ENCODE measurements at regions of chr3 and their contacts with region 1.

Region 1: GRCh38 chr3:112734718-112735350 is 93.9 kb upstream of the CCDC80 start:
- DNase-seq: peak; percentile 83
- ATAC-seq: peak; percentile 72
- H3K4me3 ChIP-seq: no peak overlapping the region
- H3K4me3 Mint-ChIP-seq: no peak overlapping the region
- H3K27ac ChIP-seq: no peak overlapping the region
- H3K27ac Mint-ChIP-seq: no peak overlapping the region
- H3K4me1 ChIP-seq: peaks cover 14 to 16% of the 10 kb centered on the region in 2 donors
- H3K4me1 Mint-ChIP-seq: peaks cover 30% of the 10 kb centered on the region
- H3K27me3 ChIP-seq: no peaks in the 10 kb centered on the region
- H3K27me3 Mint-ChIP-seq: no peaks in the 10 kb centered on the region
- CTCF ChIP-seq: peak; percentile 90

Region 2: GRCh38 chr3:112303764-112304325 is 431.0 kb before region 1 on chr3:
- CTCF ChIA-PET with region 1: no interaction called
- POLR2A ChIA-PET with region 1: no interaction called
- intact Hi-C with region 1: loop called (anchors 10 kb)
- DNase-seq: peak; percentile 77
- ATAC-seq: peak; percentile 86
- H3K4me3 ChIP-seq: peak overlapping the region; percentile 44 to 83 (median 68)
- H3K4me3 Mint-ChIP-seq: no peak overlapping the region
- H3K27ac ChIP-seq: peak overlapping the region; percentile 60 to 71
- H3K27ac Mint-ChIP-seq: no peak overlapping the region
- H3K4me1 ChIP-seq: peaks cover 22% of the 10 kb centered on the region in 2 donors
- H3K4me1 Mint-ChIP-seq: peaks cover 1% of the 10 kb centered on the region
- H3K27me3 ChIP-seq: no peaks in the 10 kb centered on the region
- H3K27me3 Mint-ChIP-seq: no peaks in the 10 kb centered on the region
- CTCF ChIP-seq: no peak

Region 3: DNA sequence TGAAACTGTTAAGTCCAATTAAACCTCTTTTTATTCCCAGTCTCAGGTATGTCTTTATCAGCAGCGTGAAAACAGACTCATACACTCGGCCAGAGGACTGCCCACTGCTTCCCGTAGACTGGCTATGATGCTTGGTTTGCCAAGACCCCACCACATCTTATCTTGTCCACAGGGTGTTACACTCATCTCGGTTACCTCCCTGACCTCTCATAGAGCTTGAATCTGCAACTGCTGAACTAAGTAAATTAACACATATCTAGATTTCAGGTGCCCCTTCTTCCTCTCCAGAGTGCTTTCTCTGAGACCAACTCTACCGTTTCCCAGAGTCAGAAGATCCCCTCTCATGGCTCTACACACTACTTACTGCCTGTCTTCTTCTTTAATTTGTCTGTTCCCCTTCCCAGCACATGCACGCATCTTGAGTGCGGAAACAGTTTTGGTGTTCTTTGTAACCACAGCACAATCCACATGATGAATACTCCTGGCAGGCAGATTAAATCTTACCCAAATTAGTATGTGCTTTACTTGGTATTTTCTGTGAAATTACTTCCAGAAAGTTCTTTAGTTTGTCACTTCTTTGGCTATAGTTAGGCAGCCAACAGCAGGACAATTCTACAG is 352.2 kb before region 1 on chr3:
- CTCF ChIA-PET with region 1: no interaction called
- POLR2A ChIA-PET with region 1: no interaction called
- intact Hi-C with region 1: no loop called
- DNase-seq: no peak
- ATAC-seq: no peak
- H3K4me3 ChIP-seq: no peak overlapping the region
- H3K4me3 Mint-ChIP-seq: no peak overlapping the region
- H3K27ac ChIP-seq: no peak overlapping the region
- H3K27ac Mint-ChIP-seq: no peak overlapping the region
- H3K4me1 ChIP-seq: peaks cover 15 to 23% of the 10 kb centered on the region in 2 donors
- H3K4me1 Mint-ChIP-seq: peaks cover 45% of the 10 kb centered on the region
- H3K27me3 ChIP-seq: no peaks in the 10 kb centered on the region
- H3K27me3 Mint-ChIP-seq: no peaks in the 10 kb centered on the region
- CTCF ChIP-seq: no peak

Region 4: GRCh38 chr3:112676659-112677234 is 58.1 kb before region 1 on chr3:
- CTCF ChIA-PET with region 1: interaction called, 12 read pairs
- POLR2A ChIA-PET with region 1: no interaction called
- intact Hi-C with region 1: no loop called
- DNase-seq: peak; percentile 75
- ATAC-seq: peak; percentile 98
- H3K4me3 ChIP-seq: no peak overlapping the region
- H3K4me3 Mint-ChIP-seq: peak overlapping the region; percentile 17
- H3K27ac ChIP-seq: no peak overlapping the region
- H3K27ac Mint-ChIP-seq: peak overlapping the region; percentile 39
- H3K4me1 ChIP-seq: peaks cover 14 to 15% of the 10 kb centered on the region in 2 donors
- H3K4me1 Mint-ChIP-seq: peaks cover 27% of the 10 kb centered on the region
- H3K27me3 ChIP-seq: peaks cover 0 to 3% (median 0%) of the 10 kb centered on the region in 4 experiments
- H3K27me3 Mint-ChIP-seq: peaks cover 12% of the 10 kb centered on the region
- CTCF ChIP-seq: no peak

Region 5: GRCh38 chr3:112751564-112752512 is 17.0 kb after region 1 on chr3:
- CTCF ChIA-PET with region 1: interaction called, 18 read pairs
- POLR2A ChIA-PET with region 1: no interaction called
- intact Hi-C with region 1: no loop called
- DNase-seq: no peak
- ATAC-seq: no peak
- H3K4me3 ChIP-seq: no peak overlapping the region
- H3K4me3 Mint-ChIP-seq: no peak overlapping the region
- H3K27ac ChIP-seq: no peak overlapping the region
- H3K27ac Mint-ChIP-seq: no peak overlapping the region
- H3K4me1 ChIP-seq: peaks cover 0 to 7% of the 10 kb centered on the region in 2 donors
- H3K4me1 Mint-ChIP-seq: peaks cover 8% of the 10 kb centered on the region
- H3K27me3 ChIP-seq: no peaks in the 10 kb centered on the region
- H3K27me3 Mint-ChIP-seq: no peaks in the 10 kb centered on the region
- CTCF ChIP-seq: no peak

Region 6: DNA sequence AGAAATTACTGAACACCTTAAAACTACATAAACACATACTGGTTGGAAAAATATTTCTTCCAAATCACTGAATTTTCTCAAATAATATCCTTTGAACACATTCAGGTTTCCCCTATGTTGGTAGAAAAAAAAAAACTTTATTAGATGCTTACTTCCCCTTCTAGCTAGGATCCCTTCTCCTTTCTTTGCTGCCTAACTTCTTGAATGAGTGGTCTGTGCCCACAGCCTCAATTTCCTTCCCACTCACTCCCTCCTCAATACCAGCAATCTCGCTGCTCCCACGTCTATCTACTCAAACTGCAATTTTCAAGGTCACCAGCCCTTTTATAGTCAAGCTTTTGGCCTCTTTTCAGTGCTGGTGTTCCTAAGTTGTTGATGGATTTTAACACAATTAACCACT is 231.8 kb after region 1 on chr3:
- CTCF ChIA-PET with region 1: interaction called, 85 read pairs
- POLR2A ChIA-PET with region 1: no interaction called
- intact Hi-C with region 1: no loop called
- DNase-seq: no peak
- ATAC-seq: no peak
- H3K4me3 ChIP-seq: no peak overlapping the region
- H3K4me3 Mint-ChIP-seq: no peak overlapping the region
- H3K27ac ChIP-seq: no peak overlapping the region
- H3K27ac Mint-ChIP-seq: peak overlapping the region; percentile 33
- H3K4me1 ChIP-seq: peaks cover 17 to 20% of the 10 kb centered on the region in 2 donors
- H3K4me1 Mint-ChIP-seq: peaks cover 49% of the 10 kb centered on the region
- H3K27me3 ChIP-seq: no peaks in the 10 kb centered on the region
- H3K27me3 Mint-ChIP-seq: no peaks in the 10 kb centered on the region
- CTCF ChIP-seq: no peak

Region 7: DNA sequence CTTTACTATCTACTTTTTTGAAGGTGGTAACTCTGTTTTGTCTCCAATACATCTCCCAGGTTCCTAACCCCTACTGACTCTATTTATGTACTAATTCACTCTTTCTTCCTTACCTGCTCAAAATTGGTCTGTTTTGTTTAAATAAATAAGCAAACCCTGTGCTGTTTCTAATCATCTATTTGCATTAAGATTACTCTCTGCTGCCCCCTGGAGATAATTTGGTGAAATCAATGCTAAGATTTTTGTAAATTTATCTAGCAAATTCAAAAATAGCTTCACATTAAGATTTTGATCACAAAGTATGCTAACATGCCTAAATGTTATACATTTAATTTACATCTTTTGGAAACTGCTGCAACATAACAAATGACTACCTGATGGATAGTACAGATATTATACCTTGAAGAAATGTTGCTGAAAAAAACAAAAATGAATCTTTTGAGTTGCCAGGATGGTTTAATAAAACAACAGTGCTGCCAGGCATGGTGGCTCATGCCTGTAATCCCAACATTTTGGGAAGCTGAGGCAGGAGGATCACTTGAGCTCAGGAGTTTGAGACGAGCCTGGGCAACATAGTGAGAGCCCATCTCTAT is 244.5 kb after region 1 on chr3:
- CTCF ChIA-PET with region 1: interaction called, 270 read pairs
- POLR2A ChIA-PET with region 1: interaction called, 3 read pairs
- intact Hi-C with region 1: loop called (anchors 1 kb)
- DNase-seq: peak; percentile 71
- ATAC-seq: peak; percentile 35
- H3K4me3 ChIP-seq: no peak overlapping the region
- H3K4me3 Mint-ChIP-seq: no peak overlapping the region
- H3K27ac ChIP-seq: no peak overlapping the region
- H3K27ac Mint-ChIP-seq: no peak overlapping the region
- H3K4me1 ChIP-seq: peaks cover 41 to 49% of the 10 kb centered on the region in 2 donors
- H3K4me1 Mint-ChIP-seq: peaks cover 61% of the 10 kb centered on the region
- H3K27me3 ChIP-seq: no peaks in the 10 kb centered on the region
- H3K27me3 Mint-ChIP-seq: no peaks in the 10 kb centered on the region
- CTCF ChIP-seq: peak; percentile 94

Region 8: DNA sequence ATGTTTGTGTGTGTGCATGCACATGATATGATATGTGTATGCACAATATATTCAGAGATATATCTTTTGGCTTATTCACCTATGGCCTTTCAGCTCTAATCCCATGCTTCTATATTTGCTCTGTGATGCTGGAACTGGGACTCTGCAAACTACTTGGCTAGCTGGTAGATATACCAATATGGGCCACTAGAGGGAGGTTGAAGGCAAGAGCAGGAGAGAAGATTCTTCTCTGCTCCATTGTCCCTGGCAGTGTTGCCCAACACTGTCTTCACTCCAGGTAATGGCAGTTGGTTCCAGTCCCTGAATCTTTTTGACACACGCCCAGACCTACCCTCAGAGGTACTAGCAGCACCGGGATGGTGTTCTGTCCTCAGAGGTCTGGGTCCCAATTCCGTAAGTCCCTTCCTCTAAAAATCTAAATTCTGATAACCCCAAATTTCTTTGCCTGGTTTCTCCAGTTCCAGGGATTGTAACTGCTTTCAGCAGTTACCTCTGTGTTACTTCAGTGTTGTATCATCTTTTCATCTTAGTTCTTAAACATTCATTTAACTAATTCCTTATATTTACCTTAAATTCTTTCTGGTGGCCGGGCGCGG is 300.7 kb after region 1 on chr3:
- CTCF ChIA-PET with region 1: interaction called, 47 read pairs
- POLR2A ChIA-PET with region 1: no interaction called
- intact Hi-C with region 1: no loop called
- DNase-seq: peak; percentile 66
- ATAC-seq: peak; percentile 76
- H3K4me3 ChIP-seq: no peak overlapping the region
- H3K4me3 Mint-ChIP-seq: no peak overlapping the region
- H3K27ac ChIP-seq: no peak overlapping the region
- H3K27ac Mint-ChIP-seq: no peak overlapping the region
- H3K4me1 ChIP-seq: no peaks in the 10 kb centered on the region
- H3K4me1 Mint-ChIP-seq: no peaks in the 10 kb centered on the region
- H3K27me3 ChIP-seq: no peaks in the 10 kb centered on the region
- H3K27me3 Mint-ChIP-seq: no peaks in the 10 kb centered on the region
- CTCF ChIP-seq: peak; percentile 88

Measured in B cell (primary cell).